Heart right ventricle (tissue), 16 donors: ENCODE measurements at regions of chr12 and their contacts with region 1.

Region 1: GRCh38 chr12:45959728-45960127 is 30.6 kb downstream of the SCAF11 start:
- DNase-seq: no peak
- ATAC-seq: no peak
- H3K4me3 ChIP-seq: no peak overlapping the region
- H3K27ac ChIP-seq: peak overlapping the region in 4 of 10 donors; percentile 7 to 44 (median 14)
- H3K4me1 ChIP-seq: peaks cover 0 to 60% (median 24%) of the 10 kb centered on the region in 9 donors
- H3K27me3 ChIP-seq: no peaks in the 10 kb centered on the region
- CTCF ChIP-seq: no peak

Region 2: DNA sequence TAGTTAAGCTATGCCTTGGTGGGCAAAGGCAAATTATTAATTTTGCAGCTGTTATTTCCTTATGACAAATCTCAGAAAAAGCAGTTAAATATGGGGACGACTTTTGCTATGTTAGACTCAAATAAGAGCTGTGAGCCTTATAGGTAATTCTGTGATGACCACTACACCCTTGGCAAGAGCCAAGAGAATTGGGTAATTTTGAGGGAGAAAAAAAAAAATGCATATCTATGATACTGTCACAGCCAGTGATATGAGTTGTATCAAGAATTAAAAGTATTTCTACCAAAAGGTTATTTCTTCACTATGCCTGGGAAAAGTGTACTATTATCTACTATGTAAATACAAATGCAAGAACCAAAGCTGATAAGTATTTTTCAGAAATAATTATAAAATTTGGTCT is 13.3 kb before region 1 on chr12:
- intact Hi-C with region 1: loop called in 1 of 10 experiments (anchors 1 kb)
- DNase-seq: no peak
- ATAC-seq: no peak
- H3K4me3 ChIP-seq: no peak overlapping the region
- H3K27ac ChIP-seq: no peak overlapping the region
- H3K4me1 ChIP-seq: peaks cover 0 to 11% (median 0%) of the 10 kb centered on the region in 9 donors
- H3K27me3 ChIP-seq: no peaks in the 10 kb centered on the region
- CTCF ChIP-seq: no peak